Dorsolateral prefrontal cortex (tissue), 120 donors: ENCODE measurements at regions of chr1 and their contacts with region 1.

Region 1: GRCh38 chr1:244047621-244048471 is 3.2 kb upstream of the ZBTB18 start:
- DNase-seq: peak; percentile 54 to 100 (median 98)
- H3K4me3 ChIP-seq: peak overlapping the region; percentile 60 to 99 (median 91)
- H3K27ac ChIP-seq: peak overlapping the region; percentile 88 to 100 (median 99)
- H3K27me3 ChIP-seq: no peaks in the 10 kb centered on the region
- CTCF ChIP-seq: peak in 25 of 56 donors; percentile 4 to 39 (median 23)

Region 2: GRCh38 chr1:243343970-243344937 is 703.6 kb before region 1 on chr1:
- intact Hi-C with region 1: loop called in 1 of 2 experiments (anchors 10 kb)
- DNase-seq: peak in 1 of 10 donors; percentile 25
- H3K4me3 ChIP-seq: no peak overlapping the region
- H3K27ac ChIP-seq: peak overlapping the region in 3 of 59 donors; percentile 3 to 30 (median 13)
- H3K27me3 ChIP-seq: no peaks in the 10 kb centered on the region
- CTCF ChIP-seq: peak; percentile 59 to 95 (median 82)

Region 3: GRCh38 chr1:243713470-243714186 is 334.2 kb before region 1 on chr1:
- intact Hi-C with region 1: loop called (anchors 5 kb)
- DNase-seq: peak in 5 of 10 donors; percentile 44 to 74 (median 54)
- H3K4me3 ChIP-seq: peak overlapping the region in 58 of 59 donors; percentile 2 to 62 (median 42)
- H3K27ac ChIP-seq: peak overlapping the region; percentile 20 to 90 (median 79)
- H3K27me3 ChIP-seq: no peaks in the 10 kb centered on the region
- CTCF ChIP-seq: peak in 2 of 56 donors; percentile 3 to 11

Region 4: DNA sequence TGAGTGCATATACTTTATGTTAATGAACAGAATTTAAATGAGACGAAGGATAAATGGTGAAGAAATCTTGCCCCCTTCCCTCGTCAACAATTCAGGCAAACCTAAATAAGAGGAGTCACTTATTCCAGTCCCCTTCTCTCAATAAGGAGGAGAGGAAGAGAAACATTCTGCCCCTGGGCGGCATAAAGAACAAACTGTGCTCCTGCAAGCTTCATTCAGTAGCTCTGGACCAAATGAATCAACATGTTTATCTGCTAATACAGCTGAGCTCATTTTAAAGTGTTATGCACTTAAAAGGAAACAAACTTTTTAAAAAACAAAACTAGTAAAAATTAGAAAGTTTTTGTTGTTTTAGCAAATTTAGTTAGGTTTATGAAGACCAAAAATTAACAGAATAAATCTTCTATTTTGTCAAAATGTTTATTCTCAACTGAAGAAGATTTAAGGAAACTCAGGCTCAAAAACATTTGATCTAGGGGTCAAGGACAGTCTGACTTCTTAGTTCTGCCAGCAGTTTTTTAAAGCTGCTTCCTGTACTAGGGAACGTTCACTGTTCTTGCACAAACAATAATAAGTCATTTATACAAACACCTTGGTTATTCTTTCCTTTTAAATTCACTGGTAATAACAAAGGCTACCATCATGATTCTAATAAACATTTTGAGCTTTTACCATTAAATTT is 256.1 kb before region 1 on chr1:
- intact Hi-C with region 1: no loop called
- DNase-seq: peak in 2 of 10 donors; percentile 15 to 16
- H3K4me3 ChIP-seq: peak overlapping the region in 6 of 59 donors; percentile 2 to 21 (median 10)
- H3K27ac ChIP-seq: peak overlapping the region in 55 of 59 donors; percentile 3 to 82 (median 51)
- H3K27me3 ChIP-seq: no peaks in the 10 kb centered on the region
- CTCF ChIP-seq: no peak

Region 5: DNA sequence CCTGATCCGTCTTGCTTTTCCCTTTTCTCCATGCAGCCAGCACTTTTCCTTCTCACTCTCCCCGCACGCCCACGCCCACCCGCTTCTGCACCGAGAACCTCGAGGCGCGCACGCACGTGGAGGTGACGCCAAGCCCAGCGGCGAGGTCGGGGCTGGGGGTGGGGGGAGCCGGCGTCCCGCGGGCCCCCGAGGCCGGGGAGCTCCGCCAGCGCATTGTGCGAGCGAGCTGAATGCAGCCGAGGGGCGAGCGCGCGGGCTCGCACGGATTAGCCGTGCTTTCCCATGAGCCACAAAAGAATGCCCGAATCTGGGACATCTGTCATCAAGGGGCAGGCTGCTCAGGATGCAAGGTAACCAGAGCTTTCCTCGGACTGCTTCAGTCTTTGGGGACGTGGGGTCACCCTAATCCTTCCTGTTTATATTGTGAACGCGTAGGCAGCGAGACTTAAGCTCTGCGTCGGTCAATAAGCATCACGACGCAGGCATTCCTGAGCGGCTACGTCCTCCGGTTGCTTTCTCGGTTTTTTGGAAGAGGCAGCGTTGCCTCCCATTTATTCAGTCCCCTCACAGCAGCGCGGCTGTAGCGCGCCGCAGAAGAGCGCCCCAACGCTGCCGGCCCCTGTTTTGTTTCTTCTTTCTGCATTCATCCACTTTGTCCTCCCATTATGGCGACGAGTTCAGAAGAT is 130.5 kb before region 1 on chr1:
- intact Hi-C with region 1: loop called in 1 of 2 experiments (anchors 10 kb)
- DNase-seq: peak; percentile 28 to 75 (median 54)
- H3K4me3 ChIP-seq: peak overlapping the region; percentile 39 to 87 (median 69)
- H3K27ac ChIP-seq: peak overlapping the region in 56 of 59 donors; percentile 9 to 92 (median 78)
- H3K27me3 ChIP-seq: no peaks in the 10 kb centered on the region
- CTCF ChIP-seq: peak in 46 of 56 donors; percentile 7 to 65 (median 39)

Region 6: GRCh38 chr1:244214009-244214967 is 166.4 kb after region 1 on chr1:
- intact Hi-C with region 1: loop called (anchors 5 kb)
- DNase-seq: no peak
- H3K4me3 ChIP-seq: no peak overlapping the region
- H3K27ac ChIP-seq: no peak overlapping the region
- H3K27me3 ChIP-seq: no peaks in the 10 kb centered on the region
- CTCF ChIP-seq: no peak